Activated CD4-positive, alpha-beta T cell treated with anti-CD3 and anti-CD28 coated beads for 36 hours (primary cell): ENCODE measurements at regions of chr12 and their contacts with region 1.

Region 1: DNA sequence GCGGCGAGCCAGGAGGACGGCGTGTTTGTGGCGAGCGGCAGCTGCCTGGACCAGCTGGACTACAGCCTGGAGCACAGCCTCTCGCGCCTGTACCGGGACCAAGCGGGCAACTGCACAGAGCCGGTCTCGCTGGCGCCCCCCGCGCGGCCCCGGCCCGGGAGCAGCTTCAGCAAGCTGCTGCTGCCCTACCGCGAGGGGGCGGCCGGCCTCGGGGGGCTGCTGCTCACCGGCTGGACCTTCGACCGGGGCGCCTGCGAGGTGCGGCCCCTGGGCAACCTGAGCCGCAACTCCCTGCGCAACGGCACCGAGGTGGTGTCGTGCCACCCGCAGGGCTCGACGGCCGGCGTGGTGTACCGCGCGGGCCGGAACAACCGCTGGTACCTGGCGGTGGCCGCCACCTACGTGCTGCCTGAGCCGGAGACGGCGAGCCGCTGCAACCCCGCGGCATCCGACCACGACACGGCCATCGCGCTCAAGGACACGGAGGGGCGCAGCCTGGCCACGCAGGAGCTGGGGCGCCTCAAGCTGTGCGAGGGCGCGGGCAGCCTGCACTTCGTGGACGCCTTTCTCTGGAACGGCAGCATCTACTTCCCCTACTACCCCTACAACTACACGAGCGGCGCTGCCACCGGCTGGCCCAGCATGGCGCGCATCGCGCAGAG is 873 bp downstream of the PLXNC1 start:
- DNase-seq: peak; percentile 62
- ATAC-seq: peak; percentile 28
- H3K4me3 Mint-ChIP-seq: peak overlapping the region; percentile 77
- H3K27ac Mint-ChIP-seq: peak overlapping the region; percentile 25
- H3K4me1 Mint-ChIP-seq: peaks cover 17% of the 10 kb centered on the region
- H3K27me3 Mint-ChIP-seq: peaks cover 24% of the 10 kb centered on the region

Region 2: GRCh38 chr12:94116191-94116590 is 33.1 kb before region 1 on chr12:
- CTCF ChIA-PET with region 1: no interaction called
- POLR2A ChIA-PET with region 1: no interaction called
- intact Hi-C with region 1: no loop called
- DNase-seq: no peak
- ATAC-seq: no peak
- H3K4me3 Mint-ChIP-seq: no peak overlapping the region
- H3K27ac Mint-ChIP-seq: no peak overlapping the region
- H3K4me1 Mint-ChIP-seq: no peaks in the 10 kb centered on the region
- H3K27me3 Mint-ChIP-seq: peaks cover 4% of the 10 kb centered on the region

Region 3: DNA sequence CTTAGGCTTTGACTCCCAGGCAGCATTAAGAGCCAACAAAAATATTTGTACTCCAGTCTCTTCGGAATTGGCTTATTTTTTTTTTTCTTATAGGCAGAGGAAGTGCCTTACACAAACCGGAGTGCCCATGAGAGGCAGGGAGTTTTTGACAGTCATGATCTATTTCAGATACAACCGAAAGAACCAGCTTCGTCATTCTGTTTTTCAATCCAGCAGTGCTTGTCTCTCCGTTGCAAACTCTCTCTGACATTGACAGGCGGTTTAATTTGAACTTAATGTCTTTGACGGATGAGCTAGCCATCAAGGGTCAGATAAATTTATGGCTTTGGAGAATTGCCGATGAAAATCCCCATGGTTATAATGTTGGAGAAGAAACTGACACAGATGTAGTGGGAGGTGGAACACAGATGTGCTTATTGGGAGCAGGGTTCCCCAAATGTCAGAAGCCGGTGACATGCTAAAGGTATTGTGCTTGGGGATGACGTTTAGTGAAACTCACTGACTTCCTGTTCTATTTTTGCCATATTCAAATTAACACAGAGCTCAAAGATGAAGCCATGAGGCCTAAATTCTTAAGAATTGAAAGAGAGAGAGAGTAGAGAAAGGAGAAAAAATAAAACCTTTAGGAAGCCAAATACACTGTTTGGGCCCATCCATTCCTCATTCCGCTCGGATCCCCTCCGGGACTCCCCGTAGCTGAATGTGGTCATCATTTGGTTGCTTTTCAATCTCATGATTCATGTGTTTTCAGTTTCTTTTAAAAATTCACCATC is 58.8 kb after region 1 on chr12:
- CTCF ChIA-PET with region 1: interaction called, 4 read pairs
- POLR2A ChIA-PET with region 1: interaction called, 6 read pairs
- intact Hi-C with region 1: loop called (anchors 1 kb)
- DNase-seq: peak; percentile 62
- ATAC-seq: peak; percentile 80
- H3K4me3 Mint-ChIP-seq: peak overlapping the region; percentile 68
- H3K27ac Mint-ChIP-seq: peak overlapping the region; percentile 99
- H3K4me1 Mint-ChIP-seq: peaks cover 51% of the 10 kb centered on the region
- H3K27me3 Mint-ChIP-seq: no peaks in the 10 kb centered on the region

Region 4: DNA sequence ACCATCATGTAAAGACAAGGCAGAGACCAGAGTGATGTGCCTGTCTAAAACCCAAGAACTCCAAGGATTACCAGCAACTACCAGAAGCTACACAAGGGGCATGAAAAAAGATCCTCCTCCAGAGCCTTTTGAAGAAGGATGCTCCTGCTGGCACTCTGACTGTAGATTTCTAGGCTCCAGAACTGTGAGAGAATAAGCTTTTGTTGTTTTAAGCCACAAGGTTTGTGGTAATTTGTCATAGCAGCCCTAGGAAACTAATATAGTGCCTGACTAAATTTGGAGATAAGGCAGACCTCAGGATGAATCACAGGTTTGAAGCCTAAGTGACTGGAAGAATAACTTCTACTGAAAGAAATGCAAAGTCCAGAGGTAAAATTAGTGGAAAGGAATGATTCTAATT is 177.5 kb after region 1 on chr12:
- CTCF ChIA-PET with region 1: no interaction called
- POLR2A ChIA-PET with region 1: no interaction called
- intact Hi-C with region 1: loop called in 1 of 2 experiments (anchors 5 kb)
- DNase-seq: no peak
- ATAC-seq: peak; percentile 86
- H3K4me3 Mint-ChIP-seq: no peak overlapping the region
- H3K27ac Mint-ChIP-seq: no peak overlapping the region
- H3K4me1 Mint-ChIP-seq: peaks cover 19% of the 10 kb centered on the region
- H3K27me3 Mint-ChIP-seq: no peaks in the 10 kb centered on the region

Region 5: GRCh38 chr12:94459728-94460615 is 310.7 kb after region 1 on chr12 and contains the start of gene CEP83:
- CTCF ChIA-PET with region 1: interaction called, 4 read pairs
- POLR2A ChIA-PET with region 1: no interaction called
- intact Hi-C with region 1: loop called (anchors 1 to 2 kb)
- DNase-seq: peak; percentile 98
- ATAC-seq: peak; percentile 99
- H3K4me3 Mint-ChIP-seq: peak within 1 kb of the TSS; percentile 96
- H3K27ac Mint-ChIP-seq: peak within 1 kb of the TSS; percentile 95
- H3K4me1 Mint-ChIP-seq: peaks cover 30% of the 10 kb centered on the region
- H3K27me3 Mint-ChIP-seq: peaks cover 10% of the 10 kb centered on the region
- total RNA-seq, gene CEP83: 21.9 to 22.6 TPM

Region 6: GRCh38 chr12:94762259-94762942 is 613.2 kb after region 1 on chr12:
- CTCF ChIA-PET with region 1: no interaction called
- POLR2A ChIA-PET with region 1: no interaction called
- intact Hi-C with region 1: loop called in 1 of 2 experiments (anchors 5 kb)
- DNase-seq: no peak
- ATAC-seq: peak; percentile 54
- H3K4me3 Mint-ChIP-seq: no peak overlapping the region
- H3K27ac Mint-ChIP-seq: no peak overlapping the region
- H3K4me1 Mint-ChIP-seq: peaks cover 5% of the 10 kb centered on the region
- H3K27me3 Mint-ChIP-seq: no peaks in the 10 kb centered on the region

Region 7: DNA sequence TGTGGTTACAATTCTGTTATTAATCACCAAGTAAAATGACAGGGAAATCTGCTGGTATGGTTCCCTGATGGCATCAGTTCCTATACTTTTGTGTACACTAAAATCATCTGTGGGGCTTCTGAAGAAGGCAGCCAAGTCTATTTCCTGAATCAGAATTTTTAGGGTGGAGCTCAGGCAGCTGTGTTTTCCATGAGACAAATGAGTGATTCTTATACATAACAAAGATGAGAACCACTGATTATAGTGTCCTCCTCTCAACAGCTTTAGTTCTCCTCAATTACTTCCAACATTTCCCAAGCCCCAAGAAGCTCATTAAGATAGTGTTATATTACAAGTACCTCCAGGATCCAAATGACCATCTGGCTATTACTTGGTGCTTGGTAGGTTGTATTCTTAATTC is 1466.5 kb after region 1 on chr12:
- CTCF ChIA-PET with region 1: no interaction called
- POLR2A ChIA-PET with region 1: no interaction called
- intact Hi-C with region 1: no loop called
- DNase-seq: no peak
- ATAC-seq: no peak
- H3K4me3 Mint-ChIP-seq: no peak overlapping the region
- H3K27ac Mint-ChIP-seq: no peak overlapping the region
- H3K4me1 Mint-ChIP-seq: no peaks in the 10 kb centered on the region
- H3K27me3 Mint-ChIP-seq: no peaks in the 10 kb centered on the region